ENCODE measurements at regions of chr2 and their contacts with region 1.

Region 1: DNA sequence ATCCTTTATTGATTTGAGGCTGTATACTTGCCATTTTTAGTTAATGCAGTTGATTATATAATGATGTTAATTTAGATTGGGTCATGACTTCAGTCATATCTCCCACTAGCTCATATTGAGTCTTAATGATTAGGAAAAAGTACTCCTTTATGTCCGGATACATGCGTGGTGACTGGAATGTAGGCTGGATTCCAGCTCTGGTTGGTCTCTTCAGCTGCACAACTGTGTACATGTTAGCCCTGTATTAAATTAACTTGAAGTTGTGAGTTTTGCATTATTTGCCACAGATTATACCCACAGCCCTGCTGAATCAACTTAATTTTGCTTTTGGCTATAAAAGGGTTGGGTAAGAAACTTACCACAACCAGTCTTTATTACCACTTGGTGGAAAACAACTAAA is 22.5 kb downstream of the MOB4 start:
- DNase-seq: no peak
- ATAC-seq: no peak
- H3K4me3 ChIP-seq: no peak overlapping the region
- H3K4me3 Mint-ChIP-seq: no peak overlapping the region
- H3K27ac ChIP-seq: no peak overlapping the region
- H3K27ac Mint-ChIP-seq: peak overlapping the region in 1 of 2 donors; percentile 16
- H3K4me1 ChIP-seq: peaks cover 4 to 7% of the 10 kb centered on the region in 2 experiments
- H3K4me1 Mint-ChIP-seq: peaks cover 36 to 47% (median 40%) of the 10 kb centered on the region in 3 donors
- H3K27me3 ChIP-seq: no peaks in the 10 kb centered on the region
- H3K27me3 Mint-ChIP-seq: no peaks in the 10 kb centered on the region

Region 2: DNA sequence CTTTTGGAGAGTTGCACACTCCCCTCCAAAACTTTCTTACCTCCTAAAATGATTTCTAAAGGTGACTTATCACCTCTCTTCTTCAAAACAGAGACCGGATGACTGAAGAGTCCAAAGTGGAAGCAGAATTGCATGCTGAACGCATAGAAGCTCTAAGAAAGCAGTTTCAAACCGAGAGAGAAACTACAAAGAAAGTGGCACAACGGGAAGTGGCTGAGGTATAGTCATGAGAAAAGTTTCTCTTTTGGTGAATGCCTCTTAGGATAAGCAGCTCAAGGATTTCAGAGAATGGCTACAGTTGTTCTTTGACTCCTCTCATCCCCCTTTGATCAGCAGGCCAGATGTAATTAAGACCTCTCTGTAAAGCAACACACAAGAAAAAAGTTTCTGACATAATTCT is 812.5 kb before region 1 on chr2:
- CTCF ChIA-PET with region 1: no interaction called
- POLR2A ChIA-PET with region 1: no interaction called
- DNase-seq: no peak
- ATAC-seq: peak in 1 of 4 experiments; percentile 32
- H3K4me3 ChIP-seq: no peak overlapping the region
- H3K4me3 Mint-ChIP-seq: no peak overlapping the region
- H3K27ac ChIP-seq: no peak overlapping the region
- H3K27ac Mint-ChIP-seq: peak overlapping the region in 1 of 2 donors; percentile 2
- H3K4me1 ChIP-seq: no peaks in the 10 kb centered on the region
- H3K4me1 Mint-ChIP-seq: peaks cover 0 to 10% (median 3%) of the 10 kb centered on the region in 3 donors
- H3K27me3 ChIP-seq: no peaks in the 10 kb centered on the region
- H3K27me3 Mint-ChIP-seq: no peaks in the 10 kb centered on the region

Region 3: GRCh38 chr2:196944584-196944983 is 593.8 kb before region 1 on chr2:
- CTCF ChIA-PET with region 1: no interaction called
- POLR2A ChIA-PET with region 1: interaction called in 1 of 2 experiments, 11 read pairs
- DNase-seq: no peak
- ATAC-seq: no peak
- H3K4me3 ChIP-seq: no peak overlapping the region
- H3K4me3 Mint-ChIP-seq: no peak overlapping the region
- H3K27ac ChIP-seq: no peak overlapping the region
- H3K27ac Mint-ChIP-seq: no peak overlapping the region
- H3K4me1 ChIP-seq: no peaks in the 10 kb centered on the region
- H3K4me1 Mint-ChIP-seq: no peaks in the 10 kb centered on the region
- H3K27me3 ChIP-seq: no peaks in the 10 kb centered on the region
- H3K27me3 Mint-ChIP-seq: peaks cover 0 to 4% of the 10 kb centered on the region in 2 donors